Sciatic nerve (tissue), 2 donors: ENCODE measurements at regions of chr9 and their contacts with region 1.

Region 1: GRCh38 chr9:4680750-4681149 is 1.4 kb downstream of the CDC37L1 start:
- DNase-seq: no peak
- ATAC-seq: no peak

Region 2: GRCh38 chr9:4555251-4555650 is 125.5 kb before region 1 on chr9:
- intact Hi-C with region 1: no loop called
- DNase-seq: no peak
- ATAC-seq: peak; percentile 52

Region 3: DNA sequence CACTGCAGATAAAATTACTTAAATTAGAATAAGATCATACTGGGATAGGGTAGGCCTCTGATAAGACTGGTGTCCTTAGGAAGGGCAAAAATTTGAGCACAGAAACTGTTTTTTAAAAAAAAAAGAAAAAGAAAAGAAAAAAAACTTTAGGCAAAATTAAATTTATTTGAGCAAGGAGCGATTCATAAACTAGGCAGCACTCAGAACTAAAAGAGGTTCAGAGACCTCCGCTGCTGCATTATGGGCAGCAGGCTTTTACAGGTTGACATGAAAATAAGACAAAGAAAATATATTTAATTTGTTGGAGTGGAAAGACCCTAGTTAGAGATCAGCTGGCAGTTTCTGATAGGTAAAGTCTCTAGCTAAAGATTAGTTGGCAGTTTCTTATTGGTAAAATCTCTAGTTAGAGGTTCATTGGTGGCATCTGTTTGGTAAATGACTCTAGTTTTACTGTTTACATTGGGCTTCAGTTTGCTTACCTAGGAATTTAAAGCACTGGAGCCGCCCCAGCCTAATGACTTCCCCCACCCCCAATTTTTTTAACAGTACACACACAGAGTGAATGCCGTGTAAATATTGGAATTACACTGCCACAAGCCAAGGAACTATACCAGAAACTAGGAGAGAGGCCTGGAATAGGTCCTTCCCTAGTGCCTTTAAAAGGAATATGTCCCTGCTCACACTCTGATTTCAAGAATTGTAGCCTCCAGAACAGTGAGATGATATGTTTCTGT is 23.2 kb before region 1 on chr9:
- intact Hi-C with region 1: loop called (anchors 1 kb)
- DNase-seq: no peak
- ATAC-seq: no peak